Breast epithelium (tissue), 4 donors: ENCODE measurements at regions of chr1 and their contacts with region 1.

Region 1: GRCh38 chr1:19377812-19378718 is 65.9 kb downstream of the SLC66A1 start:
- DNase-seq: no peak
- H3K4me3 ChIP-seq: no peak overlapping the region
- H3K27ac ChIP-seq: no peak overlapping the region
- H3K4me1 ChIP-seq: no peaks in the 10 kb centered on the region
- H3K27me3 ChIP-seq: no peaks in the 10 kb centered on the region
- CTCF ChIP-seq: no peak
- POLR2A ChIP-seq: no peak

Region 2: DNA sequence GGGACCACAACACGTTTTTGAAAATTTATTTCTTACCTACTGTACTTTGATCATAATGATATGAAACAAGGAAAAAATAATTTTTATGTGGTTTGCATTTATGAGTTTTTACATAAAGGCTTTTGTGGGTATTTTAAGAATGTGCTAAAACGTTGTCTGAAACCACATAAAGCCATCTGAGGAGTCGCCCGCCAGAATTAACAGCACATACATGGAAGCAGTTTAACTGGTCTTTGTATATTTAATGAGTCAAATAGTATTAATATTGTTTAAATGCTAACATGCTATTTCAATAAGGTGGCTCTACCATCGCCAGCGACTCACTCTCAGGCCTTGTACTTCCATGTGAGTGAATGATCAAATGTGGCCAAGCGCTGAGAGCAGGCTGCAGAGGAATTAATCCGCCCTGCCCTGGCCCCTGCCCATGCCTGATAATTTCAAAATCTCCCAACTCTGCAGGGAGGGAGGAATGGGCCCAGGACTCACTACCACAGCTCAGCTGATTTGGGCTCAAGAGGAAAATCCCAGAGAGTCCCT is 16.4 kb before region 1 on chr1:
- intact Hi-C with region 1: no loop called
- DNase-seq: no peak
- H3K4me3 ChIP-seq: no peak overlapping the region
- H3K27ac ChIP-seq: peak overlapping the region in 1 of 2 donors; percentile 46
- H3K4me1 ChIP-seq: no peaks in the 10 kb centered on the region
- H3K27me3 ChIP-seq: no peaks in the 10 kb centered on the region
- CTCF ChIP-seq: no peak
- POLR2A ChIP-seq: no peak

Region 3: GRCh38 chr1:19390901-19391595 is 13.0 kb after region 1 on chr1:
- intact Hi-C with region 1: loop called (anchors 1 kb)
- DNase-seq: peak in 1 of 2 donors; percentile 57
- H3K4me3 ChIP-seq: peak overlapping the region; percentile 5 to 13 (median 8)
- H3K27ac ChIP-seq: peak overlapping the region; percentile 84 to 90
- H3K4me1 ChIP-seq: peaks cover 7 to 12% of the 10 kb centered on the region in 2 donors
- H3K27me3 ChIP-seq: no peaks in the 10 kb centered on the region
- CTCF ChIP-seq: peak; percentile 84 to 87 (median 84)
- POLR2A ChIP-seq: no peak